ENCODE measurements at regions of chr9 and their contacts with region 1.

Region 1: DNA sequence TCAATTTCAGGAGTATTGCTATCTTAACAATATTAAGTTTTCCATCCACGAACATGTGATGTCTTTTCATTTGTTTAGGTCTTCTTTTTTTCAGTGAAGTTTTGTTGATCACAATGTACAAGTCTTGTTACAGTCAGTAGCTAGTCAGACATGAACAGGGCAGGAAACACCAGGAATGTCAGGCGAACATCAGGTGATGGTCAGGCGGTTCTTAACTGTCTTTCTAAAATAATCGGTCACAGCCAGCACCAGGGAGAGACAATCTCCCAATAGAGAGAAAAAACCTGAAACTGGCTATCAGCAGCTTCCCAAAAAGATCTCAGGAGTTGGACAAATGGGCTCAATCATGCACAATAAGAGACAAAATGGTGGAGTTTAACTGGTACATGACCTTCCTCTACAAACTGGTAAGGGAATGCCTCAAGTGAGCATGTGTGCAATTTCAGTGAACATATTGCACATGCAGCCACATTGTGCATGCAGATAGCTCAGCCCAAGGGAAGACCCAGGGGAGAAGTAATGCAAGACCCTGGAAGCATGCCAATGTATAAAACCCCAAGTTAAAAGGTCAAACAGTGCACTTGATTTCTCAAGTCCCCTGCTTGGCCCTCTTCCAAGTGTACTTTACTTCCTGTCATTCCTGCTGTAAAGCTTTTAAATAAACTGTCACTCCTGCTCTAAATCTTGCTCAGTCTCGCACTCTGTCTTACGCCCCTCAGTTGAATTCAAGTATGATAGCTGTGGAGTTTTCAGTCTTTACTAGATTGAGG is 176.1 kb upstream of the RASEF start:
- DNase-seq: no peak
- ATAC-seq: peak; percentile 46

Region 2: GRCh38 chr9:83271665-83272071 is 32.6 kb after region 1 on chr9:
- intact Hi-C with region 1: loop called (anchors 5 kb)
- DNase-seq: no peak
- ATAC-seq: no peak

Region 3: DNA sequence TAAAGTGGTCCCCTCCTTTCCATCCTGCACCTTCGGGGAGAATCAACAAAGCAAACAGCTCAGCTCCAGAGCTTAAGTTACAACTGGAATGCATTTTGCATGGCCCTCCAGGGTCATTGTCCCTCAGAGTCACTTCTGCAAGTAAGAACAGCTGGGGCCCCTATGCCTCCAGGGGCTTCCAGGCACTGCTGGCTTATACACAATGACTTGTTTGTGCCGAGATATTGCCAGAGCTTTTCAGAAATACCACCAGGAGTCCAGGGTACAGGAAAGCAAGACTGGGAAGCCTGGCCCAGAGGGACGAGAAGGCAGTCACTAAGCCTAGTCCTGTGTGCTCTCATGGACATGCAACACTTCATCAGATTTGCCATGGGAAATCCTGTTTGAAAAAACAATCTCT is 287.8 kb after region 1 on chr9:
- intact Hi-C with region 1: no loop called
- DNase-seq: no peak
- ATAC-seq: no peak

Measured in Right ventricle myocardium superior (tissue), 1 donor.